ENCODE measurements at regions of chr6 and their contacts with region 1.

Region 1: GRCh38 chr6:149545754-149546528 is at the start of gene PPIL4:
- DNase-seq: peak; percentile 96
- H3K4me3 ChIP-seq: peak within 1 kb of the TSS; percentile 92
- H3K27ac ChIP-seq: peak within 1 kb of the TSS; percentile 86
- H3K4me1 ChIP-seq: peaks cover 26% of the 10 kb centered on the region
- CTCF ChIP-seq: peak; percentile 100
- total RNA-seq, gene PPIL4: 21.6 and 29.2 TPM in 2 replicates

Region 2: GRCh38 chr6:147787417-147787816 is 1758.5 kb before region 1 on chr6:
- CTCF ChIA-PET with region 1: no interaction called
- POLR2A ChIA-PET with region 1: no interaction called
- intact Hi-C with region 1: no loop called
- DNase-seq: no peak
- H3K4me3 ChIP-seq: no peak overlapping the region
- H3K27ac ChIP-seq: no peak overlapping the region
- H3K4me1 ChIP-seq: no peaks in the 10 kb centered on the region
- CTCF ChIP-seq: no peak

Region 3: DNA sequence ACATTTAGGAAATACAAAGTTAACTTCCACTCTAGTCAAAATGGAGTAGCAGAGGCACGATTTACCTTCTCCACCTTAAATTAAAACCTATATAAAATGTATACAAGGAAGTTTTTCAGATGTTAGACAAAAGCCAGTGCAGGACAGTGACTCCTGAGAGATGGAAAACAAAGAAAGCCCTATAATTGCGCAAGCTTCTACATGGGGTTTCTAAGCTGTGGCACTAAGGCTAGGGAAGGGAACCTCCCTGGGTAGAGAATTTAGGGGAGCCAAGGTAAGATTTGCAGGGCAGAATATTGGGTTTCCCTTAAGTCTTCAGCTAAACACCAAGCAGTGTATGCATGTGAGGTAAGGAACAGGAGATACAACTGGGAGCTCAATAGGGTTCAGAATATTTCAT is 42.7 kb before region 1 on chr6:
- CTCF ChIA-PET with region 1: no interaction called
- POLR2A ChIA-PET with region 1: no interaction called
- intact Hi-C with region 1: no loop called
- DNase-seq: no peak
- H3K4me3 ChIP-seq: no peak overlapping the region
- H3K27ac ChIP-seq: no peak overlapping the region
- H3K4me1 ChIP-seq: no peaks in the 10 kb centered on the region
- CTCF ChIP-seq: no peak

Region 4: GRCh38 chr6:149717588-149718458 is 171.9 kb after region 1 on chr6 and contains the start of gene LATS1:
- CTCF ChIA-PET with region 1: no interaction called
- POLR2A ChIA-PET with region 1: no interaction called
- intact Hi-C with region 1: loop called (anchors 5 kb)
- DNase-seq: peak; percentile 91
- H3K4me3 ChIP-seq: peak within 1 kb of the TSS; percentile 94
- H3K27ac ChIP-seq: peak within 1 kb of the TSS; percentile 71
- H3K4me1 ChIP-seq: peaks cover 19% of the 10 kb centered on the region
- CTCF ChIP-seq: no peak
- total RNA-seq, gene LATS1: 15.6 and 23.1 TPM in 2 replicates

Region 5: GRCh38 chr6:150169609-150170008 is 623.7 kb after region 1 on chr6:
- CTCF ChIA-PET with region 1: no interaction called
- POLR2A ChIA-PET with region 1: no interaction called
- intact Hi-C with region 1: no loop called
- DNase-seq: no peak
- H3K4me3 ChIP-seq: no peak overlapping the region
- H3K27ac ChIP-seq: no peak overlapping the region
- H3K4me1 ChIP-seq: peaks cover 25% of the 10 kb centered on the region
- CTCF ChIP-seq: no peak